CD8-positive, alpha-beta memory T cell (primary cell): ENCODE measurements at regions of chr9 and their contacts with region 1.

Region 1: DNA sequence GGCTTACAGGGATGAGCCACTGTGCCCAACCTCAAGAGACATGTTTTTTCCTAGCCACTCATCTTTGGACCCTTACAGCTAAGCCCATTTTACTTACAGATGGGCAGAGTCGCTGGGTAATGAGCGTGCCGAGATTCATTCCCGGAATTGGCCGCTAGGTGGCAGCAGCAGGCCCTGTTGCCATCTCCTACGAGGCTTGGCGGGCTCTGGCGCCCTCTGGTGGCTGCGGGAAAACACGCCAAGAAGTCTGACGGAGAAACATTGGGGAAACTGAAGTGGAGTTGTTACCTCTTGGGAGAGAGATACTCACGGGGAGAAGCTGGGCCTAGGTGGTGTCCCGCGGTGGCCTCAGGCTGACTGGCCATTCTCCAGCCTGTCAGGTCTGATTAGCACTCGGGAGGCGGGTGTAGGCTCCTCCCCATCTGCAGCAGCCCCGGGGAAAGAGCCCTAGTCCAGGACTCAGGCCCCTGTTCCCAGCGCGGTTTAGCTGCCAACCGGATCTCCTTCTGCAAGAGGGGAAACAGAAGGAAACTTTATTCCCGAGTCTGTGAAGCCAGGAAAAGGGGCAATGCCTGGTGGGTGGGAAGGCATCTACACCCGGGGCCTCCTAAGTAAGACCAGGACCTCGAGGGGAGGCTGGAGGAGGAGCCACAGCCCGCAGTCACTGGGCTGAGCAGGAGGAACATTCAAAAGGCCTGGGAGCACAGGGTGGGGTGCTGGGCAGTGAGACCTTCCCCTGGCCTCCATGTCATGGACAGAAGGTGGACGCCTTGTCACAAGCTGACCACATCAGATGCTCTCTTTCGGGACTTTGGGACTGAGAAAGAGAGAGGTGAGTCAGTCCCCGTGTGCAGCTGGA is 9.7 kb downstream of the PTGES2 start:
- DNase-seq: peak; percentile 86 to 98 (median 95)
- H3K4me3 ChIP-seq: no peak overlapping the region
- H3K4me3 Mint-ChIP-seq: peak overlapping the region in 2 of 7 donors; percentile 26 to 55
- H3K27ac ChIP-seq: peak overlapping the region; percentile 25
- H3K27ac Mint-ChIP-seq: peak overlapping the region in 4 of 8 donors; percentile 21 to 84 (median 44)
- H3K4me1 ChIP-seq: peaks cover 11% of the 10 kb centered on the region
- H3K4me1 Mint-ChIP-seq: peaks cover 4 to 9% (median 6%) of the 10 kb centered on the region in 3 donors
- H3K27me3 ChIP-seq: no peaks in the 10 kb centered on the region
- H3K27me3 Mint-ChIP-seq: no peaks in the 10 kb centered on the region

Region 2: GRCh38 chr9:128103589-128103962 is 14.3 kb before region 1 on chr9:
- CTCF ChIA-PET with region 1: interaction called, 14 read pairs
- POLR2A ChIA-PET with region 1: no interaction called
- DNase-seq: peak in 2 of 5 donors; percentile 29 to 43
- H3K4me3 ChIP-seq: no peak overlapping the region
- H3K4me3 Mint-ChIP-seq: peak overlapping the region in 2 of 7 donors; percentile 8 to 58
- H3K27ac ChIP-seq: no peak overlapping the region
- H3K27ac Mint-ChIP-seq: peak overlapping the region in 6 of 8 donors; percentile 29 to 94 (median 61)
- H3K4me1 ChIP-seq: peaks cover 47% of the 10 kb centered on the region
- H3K4me1 Mint-ChIP-seq: peaks cover 23 to 48% (median 24%) of the 10 kb centered on the region in 3 donors
- H3K27me3 ChIP-seq: no peaks in the 10 kb centered on the region
- H3K27me3 Mint-ChIP-seq: no peaks in the 10 kb centered on the region

Region 3: DNA sequence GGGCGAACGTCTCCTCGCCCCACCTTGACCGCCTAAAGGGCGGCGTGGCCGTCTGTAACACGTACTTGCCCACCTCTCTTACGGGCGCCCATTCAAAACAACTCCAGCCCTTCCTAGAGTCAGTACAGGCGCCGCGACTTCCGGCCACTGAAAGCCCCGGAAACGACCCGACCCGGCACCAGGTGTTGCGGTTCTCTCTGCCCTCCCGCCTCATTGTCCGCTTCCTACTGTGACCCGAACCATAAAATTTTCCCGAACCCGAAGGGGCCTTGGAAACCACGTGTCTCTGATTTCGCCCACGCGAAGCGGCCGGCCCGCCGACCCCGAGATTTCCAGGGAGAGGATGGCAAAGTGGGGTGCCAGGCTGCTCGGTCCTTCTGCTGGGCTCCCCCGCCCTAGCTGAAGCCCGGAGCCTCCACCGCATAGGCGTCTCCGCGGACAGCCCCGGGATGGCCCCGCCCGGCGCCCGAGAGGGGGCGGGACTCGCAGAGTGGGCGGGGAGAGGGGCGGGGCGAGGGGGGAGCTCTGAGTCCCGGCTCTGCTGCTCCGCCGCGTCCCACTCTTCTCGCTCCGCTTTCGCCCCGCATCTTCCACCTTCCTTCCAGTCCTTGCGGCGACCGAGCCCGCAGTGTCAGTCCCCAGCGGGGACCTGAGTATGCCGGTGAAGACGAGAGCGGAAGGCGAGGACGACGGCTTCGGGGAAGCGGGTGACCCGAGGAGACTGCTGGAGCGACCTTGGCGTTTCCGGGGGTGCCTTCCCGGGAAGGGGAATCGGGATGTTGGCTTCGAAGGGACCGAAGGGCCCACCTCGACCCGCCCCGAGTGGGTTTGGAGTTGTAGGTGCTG is 10.4 kb after region 1 on chr9:
- CTCF ChIA-PET with region 1: interaction called, 31 read pairs
- POLR2A ChIA-PET with region 1: interaction called, 4 read pairs
- DNase-seq: peak; percentile 77 to 93 (median 87)
- H3K4me3 ChIP-seq: peak overlapping the region; percentile 96
- H3K4me3 Mint-ChIP-seq: peak overlapping the region; percentile 94 to 99 (median 98)
- H3K27ac ChIP-seq: peak overlapping the region; percentile 96
- H3K27ac Mint-ChIP-seq: peak overlapping the region; percentile 97 to 100 (median 99)
- H3K4me1 ChIP-seq: peaks cover 35% of the 10 kb centered on the region
- H3K4me1 Mint-ChIP-seq: peaks cover 29 to 42% (median 39%) of the 10 kb centered on the region in 3 donors
- H3K27me3 ChIP-seq: no peaks in the 10 kb centered on the region
- H3K27me3 Mint-ChIP-seq: peaks cover 6 to 9% of the 10 kb centered on the region in 2 donors

Region 4: GRCh38 chr9:128148515-128149000 is 30.7 kb after region 1 on chr9:
- CTCF ChIA-PET with region 1: no interaction called
- POLR2A ChIA-PET with region 1: no interaction called
- DNase-seq: no peak
- H3K4me3 ChIP-seq: no peak overlapping the region
- H3K4me3 Mint-ChIP-seq: no peak overlapping the region
- H3K27ac ChIP-seq: no peak overlapping the region
- H3K27ac Mint-ChIP-seq: no peak overlapping the region
- H3K4me1 ChIP-seq: no peaks in the 10 kb centered on the region
- H3K4me1 Mint-ChIP-seq: peaks cover under 1 to 1% (median under 1%) of the 10 kb centered on the region in 3 donors
- H3K27me3 ChIP-seq: no peaks in the 10 kb centered on the region
- H3K27me3 Mint-ChIP-seq: peaks cover 0 to 4% of the 10 kb centered on the region in 2 donors

Region 5: DNA sequence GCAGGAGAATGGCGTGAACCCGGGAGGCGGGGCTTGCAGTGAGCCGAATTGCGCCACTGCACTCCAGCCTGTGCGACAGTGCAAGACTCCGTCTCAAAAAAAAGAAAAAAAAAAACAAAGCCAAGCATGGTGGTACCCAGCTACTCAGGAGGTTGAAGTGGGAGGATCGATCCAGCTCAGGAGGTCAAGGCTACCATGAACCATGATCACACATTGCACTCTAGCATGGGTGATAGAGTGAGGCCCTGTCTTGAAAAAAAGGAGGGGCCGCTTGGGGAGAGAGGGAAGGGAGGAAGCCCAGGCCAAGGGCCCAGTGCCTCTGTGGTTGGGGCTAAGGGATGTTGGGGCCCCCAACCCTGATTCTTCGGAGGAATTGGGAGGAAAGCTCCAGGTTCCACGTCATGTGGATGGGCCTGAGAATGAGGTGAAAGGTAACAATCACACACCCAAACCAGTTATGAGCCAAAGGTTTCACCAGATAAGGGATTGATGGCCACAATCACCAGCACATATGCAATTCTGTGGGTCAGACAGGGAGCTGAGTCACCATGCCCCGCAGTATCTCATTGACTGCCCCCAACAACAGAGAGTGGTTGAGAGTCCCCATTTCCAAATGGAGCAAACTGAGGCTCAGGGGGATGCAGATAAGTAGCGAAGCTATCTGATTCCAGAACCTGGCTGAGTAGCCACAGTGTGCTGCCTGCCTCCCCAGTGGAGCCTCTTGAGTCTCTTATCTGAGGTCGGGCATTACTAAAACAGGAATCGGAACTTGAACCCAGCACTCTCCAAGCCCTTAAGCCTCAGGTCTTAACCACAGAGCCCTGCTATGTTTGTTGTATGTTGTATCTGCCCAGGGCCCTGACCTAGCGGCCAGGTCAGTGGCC is 178.7 kb after region 1 on chr9:
- CTCF ChIA-PET with region 1: no interaction called
- POLR2A ChIA-PET with region 1: no interaction called
- DNase-seq: no peak
- H3K4me3 ChIP-seq: no peak overlapping the region
- H3K4me3 Mint-ChIP-seq: no peak overlapping the region
- H3K27ac ChIP-seq: peak overlapping the region; percentile 51
- H3K27ac Mint-ChIP-seq: peak overlapping the region in 2 of 8 donors; percentile 19 to 26
- H3K4me1 ChIP-seq: peaks cover 4% of the 10 kb centered on the region
- H3K4me1 Mint-ChIP-seq: peaks cover 2 to 4% (median 2%) of the 10 kb centered on the region in 3 donors
- H3K27me3 ChIP-seq: no peaks in the 10 kb centered on the region
- H3K27me3 Mint-ChIP-seq: no peaks in the 10 kb centered on the region